Activated B cell treated with CpG ODN at 0.5 μM for 24 hours (primary cell): ENCODE measurements at regions of chr1 and their contacts with region 1.

Region 1: GRCh38 chr1:86940599-86940998 is 26.2 kb downstream of the HS2ST1 start:
- DNase-seq: no peak
- ATAC-seq: no peak
- H3K4me3 Mint-ChIP-seq: no peak overlapping the region
- H3K27ac Mint-ChIP-seq: no peak overlapping the region
- H3K4me1 Mint-ChIP-seq: peaks cover 22% of the 10 kb centered on the region
- H3K27me3 Mint-ChIP-seq: no peaks in the 10 kb centered on the region
- CTCF ChIP-seq: no peak

Region 2: DNA sequence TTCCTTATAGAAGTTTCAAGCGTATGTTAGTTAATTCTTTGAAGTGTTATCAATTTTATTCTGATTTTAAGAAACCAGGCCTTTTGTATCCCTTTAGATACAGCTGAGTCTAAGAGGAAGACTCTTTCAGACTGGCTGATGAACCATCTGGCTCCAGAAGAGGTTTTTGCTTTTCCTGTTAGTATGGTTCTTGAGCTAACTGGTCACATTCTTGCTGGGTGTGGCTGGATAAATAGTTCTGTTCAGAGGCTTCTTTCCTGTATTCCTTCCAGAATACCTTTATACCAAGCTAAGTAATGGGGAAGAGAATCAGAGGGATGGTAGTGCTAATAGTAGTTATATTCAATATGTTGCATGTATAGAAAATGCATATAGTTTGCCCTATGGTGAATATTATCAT is 13.7 kb before region 1 on chr1:
- CTCF ChIA-PET with region 1: no interaction called
- POLR2A ChIA-PET with region 1: no interaction called
- intact Hi-C with region 1: loop called (anchors 2 kb)
- DNase-seq: no peak
- ATAC-seq: no peak
- H3K4me3 Mint-ChIP-seq: no peak overlapping the region
- H3K27ac Mint-ChIP-seq: no peak overlapping the region
- H3K4me1 Mint-ChIP-seq: peaks cover 24% of the 10 kb centered on the region
- H3K27me3 Mint-ChIP-seq: no peaks in the 10 kb centered on the region
- CTCF ChIP-seq: no peak